ENCODE measurements at regions of chr20 and their contacts with region 1.

Region 1: GRCh38 chr20:58179432-58180099 is 48.9 kb downstream of the ANKRD60 start:
- DNase-seq: peak; percentile 71 to 78
- ATAC-seq: peak; percentile 86 to 97 (median 96)
- H3K4me3 ChIP-seq: no peak overlapping the region
- H3K4me3 Mint-ChIP-seq: peak overlapping the region; percentile 45
- H3K27ac ChIP-seq: no peak overlapping the region
- H3K27ac Mint-ChIP-seq: no peak overlapping the region
- H3K4me1 ChIP-seq: peaks cover 10% of the 10 kb centered on the region
- H3K4me1 Mint-ChIP-seq: peaks cover 1 to 9% of the 10 kb centered on the region in 2 donors
- H3K27me3 ChIP-seq: no peaks in the 10 kb centered on the region
- H3K27me3 Mint-ChIP-seq: peaks cover 17 to 31% of the 10 kb centered on the region in 2 donors
- CTCF ChIP-seq: peak; percentile 99

Region 2: DNA sequence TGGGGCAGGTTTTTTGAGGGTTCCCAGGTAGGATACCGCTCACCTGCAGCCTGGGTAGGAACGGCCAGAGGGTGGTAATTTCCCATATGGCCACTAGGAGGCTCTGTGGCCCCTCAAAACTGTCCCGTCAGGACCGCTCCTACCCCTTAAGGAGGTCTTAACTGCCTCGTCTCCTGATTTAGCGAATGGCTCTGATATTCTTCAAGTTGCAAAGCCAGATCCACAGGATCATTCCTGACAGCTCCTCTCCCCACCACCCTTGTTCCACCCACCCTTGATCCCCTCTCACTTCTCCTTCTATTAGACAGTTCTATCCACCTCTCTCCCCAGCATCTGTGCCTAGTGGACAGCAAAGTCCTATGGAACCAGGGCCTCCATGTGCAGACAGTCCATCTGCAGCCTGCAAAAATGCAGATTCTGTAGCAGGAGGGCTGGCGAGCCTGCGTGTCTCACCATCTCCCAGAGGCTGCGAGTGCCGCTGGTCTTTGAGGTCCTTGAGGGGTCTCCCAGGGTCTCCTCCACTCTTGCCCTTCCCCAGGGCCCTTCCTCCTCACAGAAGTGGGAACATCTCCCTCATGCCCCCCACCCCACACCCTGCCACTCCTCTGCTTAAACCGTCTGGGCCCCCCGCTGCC is 525.1 kb before region 1 on chr20:
- intact Hi-C with region 1: loop called (anchors 10 kb)
- DNase-seq: peak; percentile 42 to 84
- ATAC-seq: peak; percentile 73 to 92 (median 86)
- H3K4me3 ChIP-seq: no peak overlapping the region
- H3K4me3 Mint-ChIP-seq: no peak overlapping the region
- H3K27ac ChIP-seq: no peak overlapping the region
- H3K27ac Mint-ChIP-seq: no peak overlapping the region
- H3K4me1 ChIP-seq: peaks cover 25% of the 10 kb centered on the region
- H3K4me1 Mint-ChIP-seq: peaks cover 15% of the 10 kb centered on the region in 2 donors
- H3K27me3 ChIP-seq: no peaks in the 10 kb centered on the region
- H3K27me3 Mint-ChIP-seq: peaks cover 4 to 15% of the 10 kb centered on the region in 2 donors
- CTCF ChIP-seq: peak; percentile 87

Region 3: DNA sequence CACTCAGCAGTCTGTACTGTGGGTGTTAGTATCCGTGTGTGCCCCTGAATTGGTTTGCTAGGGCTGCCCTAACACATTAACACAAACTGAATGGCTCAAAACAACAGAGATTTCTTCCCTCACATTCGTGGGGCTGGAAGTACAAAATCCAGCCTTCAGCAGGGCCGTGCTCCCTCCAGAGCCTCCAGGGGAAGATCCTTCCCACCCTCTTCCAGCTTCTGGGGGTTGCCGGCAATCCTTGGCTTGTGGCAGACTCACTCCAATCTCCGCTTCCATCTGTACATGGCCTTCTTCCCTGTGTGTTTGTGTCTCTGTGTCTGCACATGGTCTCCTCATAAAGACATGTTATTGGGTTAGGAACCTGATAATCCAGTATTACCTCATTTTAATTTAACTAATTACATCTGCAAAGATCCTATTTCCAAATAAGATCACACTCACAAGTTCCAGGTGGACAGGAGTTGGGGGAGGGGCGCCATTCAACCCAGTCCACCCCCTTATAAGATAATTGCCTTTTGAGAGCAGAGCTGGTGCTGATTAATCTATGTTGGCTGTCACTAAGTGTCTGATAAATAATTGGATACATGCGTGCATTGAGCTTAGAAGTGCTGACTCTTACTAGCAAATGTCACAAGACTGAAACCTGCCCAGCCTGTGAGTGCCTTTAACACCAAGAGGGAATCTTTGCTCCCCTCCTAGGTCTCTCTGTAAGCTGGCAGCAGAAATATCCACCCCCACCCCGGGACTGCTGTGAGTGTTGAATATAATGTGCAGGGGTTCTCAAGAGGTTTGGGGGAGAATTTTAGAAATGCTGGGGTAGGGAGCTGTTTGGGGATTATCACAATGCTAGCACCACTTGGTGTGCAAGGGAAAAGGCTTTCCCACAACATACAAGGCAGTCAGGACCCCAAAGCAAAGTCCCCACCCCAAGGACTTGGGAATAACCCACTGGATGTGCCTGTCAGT is 38.8 kb before region 1 on chr20:
- intact Hi-C with region 1: no loop called
- DNase-seq: no peak
- ATAC-seq: no peak
- H3K4me3 ChIP-seq: no peak overlapping the region
- H3K4me3 Mint-ChIP-seq: no peak overlapping the region
- H3K27ac ChIP-seq: no peak overlapping the region
- H3K27ac Mint-ChIP-seq: no peak overlapping the region
- H3K4me1 ChIP-seq: no peaks in the 10 kb centered on the region
- H3K4me1 Mint-ChIP-seq: no peaks in the 10 kb centered on the region
- H3K27me3 ChIP-seq: no peaks in the 10 kb centered on the region
- H3K27me3 Mint-ChIP-seq: peaks cover 15 to 28% of the 10 kb centered on the region in 2 donors
- CTCF ChIP-seq: no peak

Region 4: GRCh38 chr20:58236612-58237330 is 57.2 kb after region 1 on chr20:
- intact Hi-C with region 1: no loop called
- DNase-seq: peak; percentile 78 to 89
- ATAC-seq: peak; percentile 92 to 94 (median 93)
- H3K4me3 ChIP-seq: peak overlapping the region; percentile 54
- H3K4me3 Mint-ChIP-seq: peak overlapping the region; percentile 92
- H3K27ac ChIP-seq: peak overlapping the region; percentile 7
- H3K27ac Mint-ChIP-seq: peak overlapping the region; percentile 85 to 93
- H3K4me1 ChIP-seq: no peaks in the 10 kb centered on the region
- H3K4me1 Mint-ChIP-seq: peaks cover 12 to 14% of the 10 kb centered on the region in 2 donors
- H3K27me3 ChIP-seq: no peaks in the 10 kb centered on the region
- H3K27me3 Mint-ChIP-seq: no peaks in the 10 kb centered on the region
- CTCF ChIP-seq: peak; percentile 99